Activated CD4-positive, alpha-beta T cell treated with anti-CD3 and anti-CD28 coated beads for 36 hours (primary cell): ENCODE measurements at regions of chr4 and their contacts with region 1.

Region 1: GRCh38 chr4:121900132-121900983 is 30.1 kb upstream of the BBS7 start:
- DNase-seq: peak; percentile 69
- ATAC-seq: peak; percentile 89
- H3K4me3 Mint-ChIP-seq: no peak overlapping the region
- H3K27ac Mint-ChIP-seq: no peak overlapping the region
- H3K4me1 Mint-ChIP-seq: peaks cover 8% of the 10 kb centered on the region
- H3K27me3 Mint-ChIP-seq: peaks cover 5% of the 10 kb centered on the region

Region 2: DNA sequence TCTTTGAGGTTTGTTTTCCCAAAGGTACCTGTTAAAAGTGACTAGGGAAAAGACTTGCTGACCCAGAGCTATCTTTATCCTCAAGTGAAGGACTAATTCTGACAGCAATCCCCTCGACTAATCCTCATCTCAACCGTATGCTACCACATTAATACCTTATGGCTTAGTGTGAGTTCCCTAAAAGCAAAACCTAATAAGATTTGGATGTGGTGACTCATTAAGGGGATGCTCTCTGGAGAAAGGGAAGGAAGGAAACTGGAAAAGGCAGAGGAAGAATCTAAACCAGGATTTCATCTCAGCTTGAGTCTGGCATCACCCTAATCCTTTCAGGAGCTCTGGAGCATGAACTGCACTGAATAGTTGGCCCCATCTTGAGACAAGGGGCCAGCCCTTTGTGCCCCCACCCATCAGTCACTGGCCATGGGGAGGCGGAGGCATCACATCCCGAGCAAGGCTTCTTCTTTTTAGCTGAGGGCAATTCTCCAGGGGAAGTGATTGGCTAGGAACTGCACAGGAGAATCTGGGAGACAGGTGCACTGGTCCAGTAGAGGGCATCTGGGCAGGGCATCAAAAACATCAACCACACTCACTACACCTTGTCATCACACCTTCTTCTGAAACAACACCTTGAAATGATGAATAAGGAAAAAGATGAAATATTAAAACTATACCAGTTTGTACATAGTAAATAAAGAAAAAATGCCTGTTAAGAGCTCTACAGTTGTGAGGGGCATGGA is 23.1 kb before region 1 on chr4:
- CTCF ChIA-PET with region 1: interaction called, 15 read pairs
- POLR2A ChIA-PET with region 1: no interaction called
- intact Hi-C with region 1: no loop called
- DNase-seq: no peak
- ATAC-seq: no peak
- H3K4me3 Mint-ChIP-seq: no peak overlapping the region
- H3K27ac Mint-ChIP-seq: no peak overlapping the region
- H3K4me1 Mint-ChIP-seq: peaks cover 3% of the 10 kb centered on the region
- H3K27me3 Mint-ChIP-seq: peaks cover 25% of the 10 kb centered on the region

Region 3: GRCh38 chr4:121913667-121914066 is 13.3 kb after region 1 on chr4:
- CTCF ChIA-PET with region 1: interaction called, 29 read pairs
- POLR2A ChIA-PET with region 1: no interaction called
- intact Hi-C with region 1: no loop called
- DNase-seq: peak; percentile 23
- ATAC-seq: peak; percentile 86
- H3K4me3 Mint-ChIP-seq: no peak overlapping the region
- H3K27ac Mint-ChIP-seq: no peak overlapping the region
- H3K4me1 Mint-ChIP-seq: peaks cover 7% of the 10 kb centered on the region
- H3K27me3 Mint-ChIP-seq: peaks cover 7% of the 10 kb centered on the region

Region 4: DNA sequence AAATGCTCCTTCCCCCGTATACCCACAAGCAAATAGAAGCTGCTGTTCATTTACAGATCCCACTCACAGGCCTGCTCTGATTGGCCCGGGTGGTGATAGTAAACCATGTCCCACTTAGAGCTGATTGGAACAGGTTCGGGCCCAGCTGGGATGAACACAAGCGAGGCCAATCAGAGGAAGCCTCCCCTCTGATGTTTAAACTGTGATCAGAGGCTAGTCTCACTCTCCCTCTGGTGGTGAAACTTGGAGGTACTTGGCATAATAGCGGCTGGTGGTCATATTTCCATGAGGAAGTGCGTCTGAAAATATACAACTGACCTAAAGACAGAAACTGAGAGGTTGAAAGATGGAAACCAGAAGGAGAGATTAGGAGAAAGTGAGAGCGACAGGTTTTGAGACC is 103.0 kb after region 1 on chr4:
- CTCF ChIA-PET with region 1: interaction called, 9 read pairs
- POLR2A ChIA-PET with region 1: no interaction called
- intact Hi-C with region 1: loop called (anchors 1 to 2 kb)
- DNase-seq: peak; percentile 41
- ATAC-seq: peak; percentile 73
- H3K4me3 Mint-ChIP-seq: no peak overlapping the region
- H3K27ac Mint-ChIP-seq: no peak overlapping the region
- H3K4me1 Mint-ChIP-seq: no peaks in the 10 kb centered on the region
- H3K27me3 Mint-ChIP-seq: peaks cover 11% of the 10 kb centered on the region

Region 5: DNA sequence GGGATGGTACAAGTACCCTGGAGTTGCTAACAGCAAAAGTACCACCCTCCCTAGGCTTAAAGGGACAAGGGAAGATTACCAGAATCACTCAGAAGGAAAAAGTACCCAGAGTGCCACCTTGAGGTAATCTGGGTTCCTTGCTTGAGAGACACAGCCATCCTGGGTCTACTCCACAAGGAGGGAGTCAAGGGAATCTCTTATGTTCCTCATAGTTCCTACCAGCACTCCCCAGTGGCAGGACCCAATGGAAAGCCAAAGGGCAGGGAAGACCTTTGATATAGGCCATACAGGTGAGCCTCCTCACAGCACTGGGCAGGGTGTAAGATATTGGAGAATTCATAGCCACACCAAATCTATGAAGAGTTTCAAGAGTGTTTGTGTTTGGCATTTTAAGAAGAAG is 550.5 kb after region 1 on chr4:
- CTCF ChIA-PET with region 1: no interaction called
- POLR2A ChIA-PET with region 1: no interaction called
- intact Hi-C with region 1: loop called in 1 of 2 experiments (anchors 5 kb)
- DNase-seq: peak; percentile 47
- ATAC-seq: peak; percentile 64
- H3K4me3 Mint-ChIP-seq: peak overlapping the region; percentile 24
- H3K27ac Mint-ChIP-seq: peak overlapping the region; percentile 88
- H3K4me1 Mint-ChIP-seq: peaks cover 20% of the 10 kb centered on the region
- H3K27me3 Mint-ChIP-seq: no peaks in the 10 kb centered on the region